Activated naive CD4-positive, alpha-beta T cell treated with anti-CD3 and anti-CD28 coated beads for 36 hours (primary cell): ENCODE measurements at regions of chr10 and their contacts with region 1.

Region 1: GRCh38 chr10:73886085-73886529 is 11.8 kb upstream of the CAMK2G start:
- DNase-seq: peak; percentile 82
- H3K4me3 Mint-ChIP-seq: no peak overlapping the region
- H3K27ac Mint-ChIP-seq: no peak overlapping the region
- H3K4me1 Mint-ChIP-seq: no peaks in the 10 kb centered on the region
- H3K27me3 Mint-ChIP-seq: no peaks in the 10 kb centered on the region

Region 2: DNA sequence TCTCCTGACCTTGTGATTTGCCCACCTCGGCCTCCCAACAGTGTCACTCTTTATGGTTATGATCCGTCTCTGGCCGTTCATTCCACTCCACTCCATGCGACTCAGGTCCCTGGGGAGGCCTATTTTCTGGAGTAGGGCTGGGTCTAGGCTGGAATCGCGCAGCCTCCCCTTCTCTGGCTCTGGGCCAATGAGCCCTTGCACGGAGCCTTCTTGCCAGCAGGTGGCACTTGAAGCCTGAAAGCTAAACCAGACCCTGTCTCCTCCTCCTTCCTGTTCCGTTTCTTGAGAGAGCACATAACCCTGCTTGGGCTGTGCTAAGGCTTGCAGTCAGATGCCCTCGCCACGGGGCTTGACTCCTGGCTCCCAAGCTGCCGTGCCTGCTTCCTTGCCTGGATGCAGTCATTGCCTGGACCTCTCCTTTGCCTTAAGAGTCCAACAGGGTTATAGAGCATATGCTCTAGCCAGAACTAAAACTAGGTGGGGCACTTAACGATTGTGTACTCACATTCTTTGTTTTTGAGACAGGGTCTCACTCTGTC is 1521.8 kb before region 1 on chr10:
- CTCF ChIA-PET with region 1: no interaction called
- intact Hi-C with region 1: no loop called
- DNase-seq: peak; percentile 94
- H3K4me3 Mint-ChIP-seq: no peak overlapping the region
- H3K27ac Mint-ChIP-seq: peak overlapping the region; percentile 74
- H3K4me1 Mint-ChIP-seq: peaks cover 10% of the 10 kb centered on the region
- H3K27me3 Mint-ChIP-seq: no peaks in the 10 kb centered on the region

Region 3: GRCh38 chr10:73559590-73559989 is 326.5 kb before region 1 on chr10:
- CTCF ChIA-PET with region 1: no interaction called
- intact Hi-C with region 1: no loop called
- DNase-seq: no peak
- H3K4me3 Mint-ChIP-seq: no peak overlapping the region
- H3K27ac Mint-ChIP-seq: no peak overlapping the region
- H3K4me1 Mint-ChIP-seq: no peaks in the 10 kb centered on the region
- H3K27me3 Mint-ChIP-seq: no peaks in the 10 kb centered on the region

Region 4: DNA sequence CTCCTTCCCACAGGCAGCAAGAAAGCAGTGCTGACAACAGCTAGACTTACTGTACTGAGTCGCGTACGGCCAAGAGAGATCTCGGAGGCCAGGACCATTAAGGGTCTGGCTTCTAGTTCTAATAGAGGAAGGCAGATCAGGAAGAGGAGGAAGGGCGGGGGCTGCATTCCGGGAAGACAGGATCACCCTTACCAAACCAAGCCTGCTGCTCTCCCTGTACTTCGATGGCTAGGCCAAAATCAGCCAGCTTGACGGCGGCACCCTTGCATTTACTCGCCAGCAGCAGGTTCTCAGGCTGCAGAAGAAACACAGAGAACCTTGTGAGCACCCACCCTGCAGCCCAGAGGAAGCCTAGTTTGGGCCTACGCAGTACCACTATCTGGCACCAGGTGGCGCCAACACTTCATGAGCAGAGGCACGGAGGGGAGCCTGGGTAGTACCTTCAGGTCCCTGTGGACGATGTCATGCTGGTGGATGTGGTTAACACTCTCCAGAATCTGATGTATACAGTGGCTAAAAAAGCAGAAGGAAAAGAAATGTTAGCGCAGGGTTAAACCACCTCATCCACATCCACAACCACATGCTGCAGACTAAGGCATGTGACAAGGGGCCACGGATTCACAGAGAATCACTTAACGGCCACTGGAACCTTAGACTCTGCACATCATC is 37.2 kb before region 1 on chr10:
- CTCF ChIA-PET with region 1: interaction called, 443 read pairs
- intact Hi-C with region 1: no loop called
- DNase-seq: peak; percentile 96
- H3K4me3 Mint-ChIP-seq: no peak overlapping the region
- H3K27ac Mint-ChIP-seq: peak overlapping the region; percentile 66
- H3K4me1 Mint-ChIP-seq: peaks cover 8% of the 10 kb centered on the region
- H3K27me3 Mint-ChIP-seq: no peaks in the 10 kb centered on the region

Region 5: DNA sequence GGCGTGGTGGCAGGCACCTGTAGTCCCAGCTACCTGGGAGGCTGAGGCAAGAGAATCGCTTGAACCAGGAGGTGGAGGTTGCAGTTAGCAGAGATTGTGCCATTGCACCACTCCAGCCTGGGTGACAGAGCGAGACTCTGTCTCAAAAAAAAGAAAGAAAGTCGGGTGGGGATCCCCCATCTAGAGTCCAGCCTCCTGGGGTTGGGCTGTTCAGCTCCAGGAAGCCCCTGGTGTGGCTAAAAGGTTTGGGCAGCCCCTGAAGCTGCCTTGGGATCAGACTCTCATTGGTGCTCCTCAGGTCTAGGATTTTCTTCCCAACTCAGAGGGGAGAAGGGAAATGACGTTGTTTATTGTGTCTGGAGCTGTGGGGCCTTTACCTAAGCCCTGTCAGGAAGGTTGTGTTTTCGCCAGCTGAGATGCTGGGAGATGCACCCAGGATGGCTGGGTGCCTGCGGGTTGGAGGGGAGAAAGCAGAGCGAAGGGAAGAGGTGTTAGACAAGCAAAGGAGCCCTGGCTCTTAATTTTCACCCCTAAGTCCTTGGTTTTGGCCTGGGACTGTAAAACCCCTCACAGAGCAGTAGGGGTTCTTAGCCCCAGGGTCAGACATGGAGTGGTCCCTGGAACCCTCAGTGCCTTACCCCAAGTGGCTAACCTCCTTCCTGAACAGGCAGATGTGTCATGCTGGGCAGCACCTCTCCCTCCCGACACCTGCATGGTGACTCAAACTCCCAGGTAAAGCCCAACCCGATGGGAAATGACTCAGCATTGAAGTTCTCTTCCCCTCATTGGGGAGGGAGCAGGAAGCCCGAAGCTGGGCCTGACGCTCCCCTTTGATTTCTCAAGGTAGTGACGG is 45.9 kb after region 1 on chr10:
- CTCF ChIA-PET with region 1: interaction called, 396 read pairs
- intact Hi-C with region 1: loop called (anchors 2 kb)
- DNase-seq: peak; percentile 92
- H3K4me3 Mint-ChIP-seq: no peak overlapping the region
- H3K27ac Mint-ChIP-seq: peak overlapping the region; percentile 83
- H3K4me1 Mint-ChIP-seq: peaks cover 15% of the 10 kb centered on the region
- H3K27me3 Mint-ChIP-seq: peaks cover 7% of the 10 kb centered on the region

Region 6: GRCh38 chr10:73956476-73957359 is 70.6 kb after region 1 on chr10:
- CTCF ChIA-PET with region 1: interaction called, 12 read pairs
- intact Hi-C with region 1: loop called (anchors 5 kb)
- DNase-seq: peak; percentile 59
- H3K4me3 Mint-ChIP-seq: peak overlapping the region; percentile 36
- H3K27ac Mint-ChIP-seq: peak overlapping the region; percentile 79
- H3K4me1 Mint-ChIP-seq: peaks cover 43% of the 10 kb centered on the region
- H3K27me3 Mint-ChIP-seq: no peaks in the 10 kb centered on the region

Region 7: GRCh38 chr10:74058658-74059057 is 172.6 kb after region 1 on chr10:
- CTCF ChIA-PET with region 1: interaction called, 5 read pairs
- intact Hi-C with region 1: loop called (anchors 1 kb)
- DNase-seq: peak; percentile 48
- H3K4me3 Mint-ChIP-seq: no peak overlapping the region
- H3K27ac Mint-ChIP-seq: no peak overlapping the region
- H3K4me1 Mint-ChIP-seq: peaks cover 21% of the 10 kb centered on the region
- H3K27me3 Mint-ChIP-seq: no peaks in the 10 kb centered on the region

Region 8: GRCh38 chr10:74103560-74104248 is 217.6 kb after region 1 on chr10:
- CTCF ChIA-PET with region 1: interaction called, 5 read pairs
- intact Hi-C with region 1: loop called (anchors 1 kb)
- DNase-seq: no peak
- H3K4me3 Mint-ChIP-seq: no peak overlapping the region
- H3K27ac Mint-ChIP-seq: no peak overlapping the region
- H3K4me1 Mint-ChIP-seq: no peaks in the 10 kb centered on the region
- H3K27me3 Mint-ChIP-seq: no peaks in the 10 kb centered on the region